ENCODE measurements at regions of chr1 and their contacts with region 1.

Region 1: GRCh38 chr1:11838349-11839272 is 9.0 kb downstream of the NPPA start:
- DNase-seq: peak; percentile 84
- ATAC-seq: peak; percentile 94
- H3K4me3 Mint-ChIP-seq: no peak overlapping the region
- H3K27ac Mint-ChIP-seq: no peak overlapping the region; the same call in 1 of the 2 replicates
- H3K4me1 Mint-ChIP-seq: no peaks in the 10 kb centered on the region
- H3K27me3 Mint-ChIP-seq: no peaks in the 10 kb centered on the region
- CTCF ChIP-seq: peak; percentile 89

Region 2: GRCh38 chr1:11858968-11859871 is 20.6 kb after region 1 on chr1:
- CTCF ChIA-PET with region 1: interaction called, 11 read pairs
- POLR2A ChIA-PET with region 1: no interaction called
- DNase-seq: peak; percentile 92
- ATAC-seq: peak; percentile 80
- H3K4me3 Mint-ChIP-seq: peak overlapping the region; percentile 29
- H3K27ac Mint-ChIP-seq: no peak overlapping the region
- H3K4me1 Mint-ChIP-seq: no peaks in the 10 kb centered on the region
- H3K27me3 Mint-ChIP-seq: peaks cover 46% of the 10 kb centered on the region
- CTCF ChIP-seq: no peak

Region 3: DNA sequence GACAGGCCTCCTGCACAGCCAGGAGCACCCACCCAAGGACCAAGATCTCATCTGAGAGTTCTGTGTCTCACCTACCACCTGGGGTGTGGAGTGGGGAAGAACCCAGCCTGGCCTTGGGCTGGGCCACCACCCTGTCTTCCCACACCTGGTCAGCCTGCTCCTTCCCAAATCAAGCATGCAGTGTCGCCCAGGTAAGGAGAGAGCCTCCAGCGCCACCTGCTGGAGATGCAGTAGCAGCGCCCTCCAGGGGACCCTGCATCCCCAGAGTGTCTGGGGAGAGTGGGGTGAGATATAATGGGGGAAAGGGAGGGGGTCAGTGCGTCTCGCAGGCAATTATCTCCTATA is 55.3 kb after region 1 on chr1:
- CTCF ChIA-PET with region 1: interaction called, 19 read pairs
- POLR2A ChIA-PET with region 1: no interaction called
- DNase-seq: peak; percentile 87
- ATAC-seq: peak; percentile 91
- H3K4me3 Mint-ChIP-seq: no peak overlapping the region
- H3K27ac Mint-ChIP-seq: no peak overlapping the region
- H3K4me1 Mint-ChIP-seq: no peaks in the 10 kb centered on the region
- H3K27me3 Mint-ChIP-seq: no peaks in the 10 kb centered on the region; the same call in 1 of the 2 replicates
- CTCF ChIP-seq: peak; percentile 77

Region 4: DNA sequence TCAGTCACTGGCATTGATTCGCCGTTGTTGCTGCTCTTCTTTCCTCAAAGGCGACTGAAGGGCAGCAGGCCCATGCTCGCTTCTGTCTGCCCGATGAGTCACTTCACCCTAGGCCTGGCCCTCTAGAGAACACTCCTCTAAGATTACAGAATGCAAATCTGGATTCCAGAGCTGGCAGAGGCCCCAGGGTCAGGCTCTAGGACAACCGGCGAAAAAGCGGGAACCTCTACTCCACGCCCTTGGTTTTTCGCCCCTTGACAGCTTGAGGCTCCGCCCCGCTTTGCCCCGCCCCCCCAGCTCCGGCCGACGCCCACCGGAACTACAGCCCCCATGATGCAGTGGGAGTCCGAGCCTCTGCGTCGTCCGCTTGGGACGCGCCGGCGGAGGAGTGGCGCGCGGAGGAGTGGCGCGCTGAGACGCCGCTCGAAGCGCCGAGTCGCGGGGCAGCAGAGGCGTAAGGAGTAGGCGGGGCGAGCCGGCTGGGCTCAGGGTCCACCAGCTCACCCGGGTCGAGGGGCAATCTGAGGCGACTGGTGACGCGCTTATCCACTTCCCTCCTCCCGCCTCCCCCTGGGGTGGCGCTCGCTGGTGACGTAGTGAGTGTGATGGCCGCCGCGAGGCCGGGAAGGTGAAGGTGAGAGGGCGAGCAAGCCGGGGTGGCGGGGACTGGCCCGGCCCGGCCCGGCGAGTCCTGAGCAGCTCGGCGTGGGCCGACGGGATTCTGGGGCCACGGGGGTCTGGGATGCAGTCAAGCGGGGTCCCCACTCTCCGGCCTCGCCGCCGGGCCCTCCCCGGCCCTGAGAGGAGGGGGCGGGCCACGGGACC is 141.5 kb after region 1 on chr1 and contains the start of gene MFN2:
- CTCF ChIA-PET with region 1: interaction called, 21 read pairs
- POLR2A ChIA-PET with region 1: no interaction called
- DNase-seq: peak; percentile 99
- ATAC-seq: peak; percentile 97
- H3K4me3 Mint-ChIP-seq: peak within 1 kb of the TSS; percentile 98
- H3K27ac Mint-ChIP-seq: peak within 1 kb of the TSS; percentile 99
- H3K4me1 Mint-ChIP-seq: peaks cover 21% of the 10 kb centered on the region
- H3K27me3 Mint-ChIP-seq: no peaks in the 10 kb centered on the region
- CTCF ChIP-seq: no peak
- total RNA-seq, gene MFN2: 56.8 to 63.0 TPM (median 59.8 TPM) in 3 replicates

Region 5: GRCh38 chr1:12161662-12162458 is 323.2 kb after region 1 on chr1:
- CTCF ChIA-PET with region 1: no interaction called
- POLR2A ChIA-PET with region 1: no interaction called
- DNase-seq: no peak
- ATAC-seq: no peak; the same call in 1 of the 2 replicates
- H3K4me3 Mint-ChIP-seq: no peak overlapping the region
- H3K27ac Mint-ChIP-seq: no peak overlapping the region
- H3K4me1 Mint-ChIP-seq: peaks cover 21% of the 10 kb centered on the region
- H3K27me3 Mint-ChIP-seq: peaks cover 24% of the 10 kb centered on the region
- CTCF ChIP-seq: no peak

Measured in WTC11 (cell line).